ENCODE measurements at regions of chr2 and their contacts with region 1.

Region 1: GRCh38 chr2:204325468-204325867 is 219.8 kb upstream of the PARD3B start:
- DNase-seq: peak; percentile 18 to 80 (median 71)
- ATAC-seq: peak; percentile 83
- H3K4me3 ChIP-seq: no peak overlapping the region
- H3K4me3 Mint-ChIP-seq: peak overlapping the region in 1 of 10 donors; percentile 36
- H3K27ac ChIP-seq: no peak overlapping the region
- H3K27ac Mint-ChIP-seq: peak overlapping the region in 1 of 9 donors; percentile 15
- H3K4me1 ChIP-seq: no peaks in the 10 kb centered on the region
- H3K4me1 Mint-ChIP-seq: peaks cover 0 to 14% (median 4%) of the 10 kb centered on the region in 7 donors
- H3K27me3 ChIP-seq: no peaks in the 10 kb centered on the region
- H3K27me3 Mint-ChIP-seq: peaks cover 5 to 12% (median 7%) of the 10 kb centered on the region in 5 donors

Region 2: GRCh38 chr2:204538182-204539018 is 212.9 kb after region 1 on chr2:
- CTCF ChIA-PET with region 1: no interaction called
- POLR2A ChIA-PET with region 1: no interaction called
- intact Hi-C with region 1: no loop called
- DNase-seq: no peak
- ATAC-seq: no peak
- H3K4me3 ChIP-seq: no peak overlapping the region
- H3K4me3 Mint-ChIP-seq: no peak overlapping the region
- H3K27ac ChIP-seq: no peak overlapping the region
- H3K27ac Mint-ChIP-seq: no peak overlapping the region
- H3K4me1 ChIP-seq: no peaks in the 10 kb centered on the region
- H3K4me1 Mint-ChIP-seq: no peaks in the 10 kb centered on the region
- H3K27me3 ChIP-seq: no peaks in the 10 kb centered on the region
- H3K27me3 Mint-ChIP-seq: peaks cover 6 to 18% (median 16%) of the 10 kb centered on the region in 5 donors

Region 3: GRCh38 chr2:204691911-204692510 is 366.5 kb after region 1 on chr2:
- CTCF ChIA-PET with region 1: no interaction called
- POLR2A ChIA-PET with region 1: no interaction called
- intact Hi-C with region 1: loop called (anchors 1 to 10 kb)
- DNase-seq: peak in 6 of 9 donors; percentile 4 to 42 (median 26)
- ATAC-seq: peak; percentile 55
- H3K4me3 ChIP-seq: no peak overlapping the region
- H3K4me3 Mint-ChIP-seq: no peak overlapping the region
- H3K27ac ChIP-seq: no peak overlapping the region
- H3K27ac Mint-ChIP-seq: no peak overlapping the region
- H3K4me1 ChIP-seq: peaks cover 0 to 6% of the 10 kb centered on the region in 2 donors
- H3K4me1 Mint-ChIP-seq: peaks cover 0 to 15% (median 9%) of the 10 kb centered on the region in 7 donors
- H3K27me3 ChIP-seq: no peaks in the 10 kb centered on the region
- H3K27me3 Mint-ChIP-seq: peaks cover 0 to 13% (median 0%) of the 10 kb centered on the region in 5 donors

Region 4: DNA sequence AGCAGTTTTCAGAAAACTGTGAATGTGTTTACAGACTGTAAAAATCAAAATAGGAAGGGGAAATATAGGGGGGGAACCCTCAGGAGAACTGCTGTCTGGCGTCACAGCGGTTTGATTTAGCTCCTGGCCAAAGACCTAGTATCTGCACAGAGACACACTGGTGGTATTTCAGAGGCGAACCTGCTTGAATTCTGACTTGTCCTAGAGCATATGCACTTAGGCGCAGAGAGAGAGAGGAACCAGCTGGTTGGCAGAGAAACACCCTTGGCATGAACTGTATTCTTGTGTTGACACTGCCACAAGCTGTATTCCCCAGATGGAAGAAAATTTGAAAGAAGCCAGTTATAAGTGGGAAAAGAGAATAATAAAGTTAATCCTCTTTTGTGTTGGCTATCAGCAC is 850.4 kb after region 1 on chr2:
- CTCF ChIA-PET with region 1: no interaction called
- POLR2A ChIA-PET with region 1: no interaction called
- intact Hi-C with region 1: no loop called
- DNase-seq: no peak
- ATAC-seq: no peak
- H3K4me3 ChIP-seq: no peak overlapping the region
- H3K4me3 Mint-ChIP-seq: no peak overlapping the region
- H3K27ac ChIP-seq: no peak overlapping the region
- H3K27ac Mint-ChIP-seq: no peak overlapping the region
- H3K4me1 ChIP-seq: no peaks in the 10 kb centered on the region
- H3K4me1 Mint-ChIP-seq: peaks cover 0 to 1% (median 0%) of the 10 kb centered on the region in 7 donors
- H3K27me3 ChIP-seq: no peaks in the 10 kb centered on the region
- H3K27me3 Mint-ChIP-seq: peaks cover 0 to 10% (median 0%) of the 10 kb centered on the region in 5 donors

Region 5: DNA sequence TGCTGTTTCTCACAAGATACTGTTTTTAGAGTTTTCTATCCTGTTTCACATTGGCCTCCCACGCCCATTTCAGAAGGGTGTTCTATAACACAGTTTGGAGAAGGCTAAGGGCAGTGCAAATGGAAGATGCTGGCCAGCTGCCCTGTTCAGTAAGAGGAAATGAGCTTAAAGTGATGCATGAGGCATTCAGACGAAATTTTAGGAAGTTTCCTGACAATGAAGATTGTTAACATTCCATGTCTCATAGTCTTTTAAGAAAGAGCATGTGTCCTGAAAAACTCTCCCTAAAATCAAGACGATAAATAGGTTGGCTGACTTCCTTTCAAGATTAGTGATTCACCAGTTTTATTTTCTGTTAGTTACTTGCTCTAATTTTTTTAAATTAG is 872.7 kb after region 1 on chr2:
- CTCF ChIA-PET with region 1: no interaction called
- POLR2A ChIA-PET with region 1: no interaction called
- intact Hi-C with region 1: loop called in 1 of 2 experiments (anchors 5 kb)
- DNase-seq: no peak
- ATAC-seq: no peak
- H3K4me3 ChIP-seq: no peak overlapping the region
- H3K4me3 Mint-ChIP-seq: no peak overlapping the region
- H3K27ac ChIP-seq: no peak overlapping the region
- H3K27ac Mint-ChIP-seq: no peak overlapping the region
- H3K4me1 ChIP-seq: peaks cover 0 to 6% of the 10 kb centered on the region in 2 donors
- H3K4me1 Mint-ChIP-seq: peaks cover 0 to 9% (median 6%) of the 10 kb centered on the region in 7 donors
- H3K27me3 ChIP-seq: no peaks in the 10 kb centered on the region
- H3K27me3 Mint-ChIP-seq: no peaks in the 10 kb centered on the region

Region 6: DNA sequence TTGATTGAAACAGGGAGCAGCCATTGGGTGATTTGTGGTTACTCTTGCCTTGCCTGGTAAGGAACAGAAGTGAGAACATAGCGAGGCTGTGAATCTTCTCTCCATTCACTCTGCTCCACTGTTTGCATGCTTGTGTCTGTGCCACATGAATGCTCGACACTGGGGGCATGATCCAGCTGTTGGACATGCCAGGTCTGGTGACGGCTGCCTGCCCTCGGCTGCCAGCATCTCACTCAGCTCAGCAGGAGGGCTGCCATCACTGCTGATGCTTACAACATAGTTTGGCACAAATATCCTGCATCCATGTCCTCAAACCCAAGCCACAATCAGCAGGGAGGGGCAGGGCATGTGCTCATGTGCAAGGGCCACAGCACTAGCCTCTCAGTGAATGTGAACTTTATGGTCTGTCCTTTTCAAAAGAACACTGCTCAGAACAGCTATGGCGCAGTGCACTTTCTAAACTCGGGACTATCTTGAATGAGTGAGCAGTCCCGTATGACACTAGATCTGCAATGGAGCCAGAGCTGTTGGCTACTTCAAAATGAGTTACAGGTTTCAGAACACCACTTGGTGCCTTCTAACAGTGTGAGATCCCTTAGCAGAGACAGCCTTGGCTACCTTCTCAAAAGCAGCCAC is 1483.1 kb after region 1 on chr2:
- CTCF ChIA-PET with region 1: no interaction called
- POLR2A ChIA-PET with region 1: no interaction called
- intact Hi-C with region 1: loop called in 1 of 2 experiments (anchors 1 kb)
- DNase-seq: no peak
- ATAC-seq: no peak
- H3K4me3 ChIP-seq: no peak overlapping the region
- H3K4me3 Mint-ChIP-seq: no peak overlapping the region
- H3K27ac ChIP-seq: no peak overlapping the region
- H3K27ac Mint-ChIP-seq: no peak overlapping the region
- H3K4me1 ChIP-seq: no peaks in the 10 kb centered on the region
- H3K4me1 Mint-ChIP-seq: peaks cover 0 to 1% (median 0%) of the 10 kb centered on the region in 7 donors
- H3K27me3 ChIP-seq: no peaks in the 10 kb centered on the region
- H3K27me3 Mint-ChIP-seq: peaks cover 0 to 8% (median 4%) of the 10 kb centered on the region in 5 donors

Region 7: GRCh38 chr2:205885492-205886099 is 1560.1 kb after region 1 on chr2:
- CTCF ChIA-PET with region 1: interaction called, 5 read pairs
- POLR2A ChIA-PET with region 1: no interaction called
- intact Hi-C with region 1: loop called (anchors 1 kb)
- DNase-seq: peak in 8 of 9 donors; percentile 6 to 76 (median 30)
- ATAC-seq: no peak
- H3K4me3 ChIP-seq: no peak overlapping the region
- H3K4me3 Mint-ChIP-seq: no peak overlapping the region
- H3K27ac ChIP-seq: no peak overlapping the region
- H3K27ac Mint-ChIP-seq: no peak overlapping the region
- H3K4me1 ChIP-seq: no peaks in the 10 kb centered on the region
- H3K4me1 Mint-ChIP-seq: peaks cover 0 to 6% (median 0%) of the 10 kb centered on the region in 7 donors
- H3K27me3 ChIP-seq: no peaks in the 10 kb centered on the region
- H3K27me3 Mint-ChIP-seq: peaks cover 14 to 40% (median 24%) of the 10 kb centered on the region in 5 donors

Region 8: GRCh38 chr2:205947621-205948495 is 1622.4 kb after region 1 on chr2:
- CTCF ChIA-PET with region 1: interaction called, 7 read pairs
- POLR2A ChIA-PET with region 1: no interaction called
- intact Hi-C with region 1: loop called (anchors 1 to 5 kb)
- DNase-seq: peak in 8 of 9 donors; percentile 12 to 53 (median 28)
- ATAC-seq: peak; percentile 71
- H3K4me3 ChIP-seq: no peak overlapping the region
- H3K4me3 Mint-ChIP-seq: peak overlapping the region in 1 of 10 donors; percentile 13
- H3K27ac ChIP-seq: no peak overlapping the region
- H3K27ac Mint-ChIP-seq: no peak overlapping the region
- H3K4me1 ChIP-seq: no peaks in the 10 kb centered on the region
- H3K4me1 Mint-ChIP-seq: peaks cover 0 to 4% (median 3%) of the 10 kb centered on the region in 7 donors
- H3K27me3 ChIP-seq: no peaks in the 10 kb centered on the region
- H3K27me3 Mint-ChIP-seq: peaks cover 0 to 25% (median 9%) of the 10 kb centered on the region in 5 donors